Gastrocnemius medialis (tissue), 4 donors: ENCODE measurements at regions of chr10 and their contacts with region 1.

Region 1: DNA sequence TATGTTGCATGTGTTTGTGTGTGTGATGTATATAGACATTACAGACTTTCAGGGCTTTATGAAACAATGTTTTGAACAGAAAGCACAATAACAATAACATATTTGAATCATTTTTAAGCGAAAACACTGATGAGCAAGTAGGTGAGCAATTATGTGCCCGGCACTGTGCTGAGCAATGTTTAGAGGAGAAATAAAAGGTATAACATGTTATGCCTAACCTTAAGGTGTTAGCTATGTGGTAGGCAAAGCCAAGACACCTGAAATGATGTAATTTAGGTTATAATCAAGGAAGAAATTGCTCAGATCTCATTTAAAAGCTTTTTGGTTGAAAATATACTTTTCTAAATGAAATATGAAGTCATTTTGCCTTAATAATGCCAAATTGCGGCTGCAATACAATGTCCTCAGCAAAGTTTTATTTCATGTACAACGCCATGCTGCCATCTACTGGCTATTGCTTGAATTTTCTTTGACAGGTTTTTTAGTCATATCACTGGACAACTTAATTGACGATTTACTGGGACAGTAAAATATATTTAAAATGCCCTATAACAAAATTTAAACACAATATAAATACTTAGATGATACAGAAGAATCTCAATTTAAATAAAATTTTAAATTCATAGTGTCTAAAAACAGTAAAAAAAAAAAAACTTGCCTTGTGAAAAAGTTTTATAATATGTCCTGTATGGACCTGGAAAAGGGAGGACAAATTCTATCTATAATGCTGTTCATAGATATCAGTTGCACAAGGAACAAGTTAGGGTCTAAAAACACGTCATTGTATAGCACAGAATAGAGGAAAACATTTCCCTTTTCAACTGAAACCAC is 131.1 kb upstream of the CDK1 start:
- DNase-seq: no peak
- ATAC-seq: peak; percentile 62 to 72
- H3K4me3 ChIP-seq: no peak overlapping the region
- H3K27ac ChIP-seq: no peak overlapping the region
- H3K4me1 ChIP-seq: peaks cover 0 to 3% of the 10 kb centered on the region in 2 donors
- H3K27me3 ChIP-seq: no peaks in the 10 kb centered on the region
- CTCF ChIP-seq: peak; percentile 60 to 84 (median 73)
- POLR2A ChIP-seq: no peak

Region 2: DNA sequence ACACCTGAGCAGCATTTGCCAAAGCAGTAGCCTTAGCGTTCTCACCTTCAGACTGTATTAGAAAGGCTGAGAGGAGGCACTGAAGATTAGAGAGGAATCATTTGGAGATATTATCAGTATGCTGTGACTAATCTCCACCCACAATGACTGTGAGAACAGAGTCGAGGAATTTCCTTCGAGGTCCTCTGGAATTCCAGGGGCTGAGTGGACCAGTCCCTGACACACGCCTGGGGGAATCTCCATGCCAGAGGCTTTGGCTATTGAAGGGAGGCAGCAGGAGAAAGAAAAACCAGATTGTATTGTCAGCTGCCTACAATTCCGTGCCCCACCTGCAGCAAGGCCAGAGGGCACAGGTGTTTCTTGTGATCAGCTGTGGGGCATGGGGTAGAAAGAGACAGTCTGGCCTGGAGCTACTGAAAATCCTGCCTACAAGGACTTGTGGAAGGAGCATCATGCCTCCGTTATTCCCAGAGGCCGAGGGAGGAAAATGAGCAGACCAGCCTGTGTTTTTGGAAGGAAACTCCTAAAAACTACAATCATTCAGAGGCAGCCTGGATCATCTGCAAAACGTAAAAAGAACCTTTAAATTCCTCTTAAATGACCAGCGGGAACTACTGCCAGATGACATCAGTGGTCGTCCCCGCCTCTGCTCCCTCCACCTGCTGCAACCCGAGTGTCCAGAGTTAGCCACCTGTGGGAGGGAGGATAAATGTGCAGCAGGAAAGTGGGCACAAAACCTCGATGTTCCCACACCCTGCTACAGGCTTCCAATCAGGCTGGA is 232.2 kb before region 1 on chr10:
- in situ Hi-C with region 1: no loop called
- intact Hi-C with region 1: no loop called
- DNase-seq: no peak
- ATAC-seq: no peak
- H3K4me3 ChIP-seq: no peak overlapping the region
- H3K27ac ChIP-seq: no peak overlapping the region
- H3K4me1 ChIP-seq: no peaks in the 10 kb centered on the region
- H3K27me3 ChIP-seq: no peaks in the 10 kb centered on the region
- CTCF ChIP-seq: no peak
- POLR2A ChIP-seq: no peak

Region 3: DNA sequence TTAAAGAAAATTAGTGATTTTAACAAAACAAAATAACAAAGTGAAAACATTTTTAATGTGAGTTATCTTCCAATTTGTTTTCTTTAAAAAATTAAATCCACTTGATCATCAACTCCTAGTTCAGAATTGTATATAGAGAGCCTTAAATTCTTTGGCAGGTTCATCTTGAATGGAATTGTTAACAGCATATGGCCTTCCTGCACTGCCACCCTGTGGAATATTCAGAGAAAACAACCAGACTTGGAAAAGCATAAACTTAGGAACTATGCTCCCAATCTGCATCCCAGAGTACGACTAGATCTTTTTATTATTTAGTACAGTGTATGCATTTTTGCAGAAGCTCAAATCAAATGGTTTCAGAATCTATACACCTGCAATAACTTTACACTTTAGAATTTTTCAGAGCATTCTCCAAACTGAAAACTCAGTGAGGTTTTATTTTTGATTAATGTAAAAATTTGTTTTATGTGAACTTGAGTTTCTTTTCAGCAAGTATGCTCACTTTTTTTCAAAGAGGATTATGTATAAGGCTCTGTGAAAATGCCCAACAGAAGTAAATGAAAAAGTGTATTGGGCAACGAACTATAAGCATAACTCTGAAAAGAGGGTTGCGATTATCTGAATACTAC is 212.6 kb before region 1 on chr10:
- in situ Hi-C with region 1: loop called in 1 of 4 experiments (anchors 25 kb)
- intact Hi-C with region 1: no loop called
- DNase-seq: no peak
- ATAC-seq: no peak
- H3K4me3 ChIP-seq: no peak overlapping the region
- H3K27ac ChIP-seq: no peak overlapping the region
- H3K4me1 ChIP-seq: peaks cover 0 to 5% of the 10 kb centered on the region in 2 donors
- H3K27me3 ChIP-seq: no peaks in the 10 kb centered on the region
- CTCF ChIP-seq: peak in 4 of 5 experiments; percentile 54 to 61 (median 60)
- POLR2A ChIP-seq: no peak

Region 4: DNA sequence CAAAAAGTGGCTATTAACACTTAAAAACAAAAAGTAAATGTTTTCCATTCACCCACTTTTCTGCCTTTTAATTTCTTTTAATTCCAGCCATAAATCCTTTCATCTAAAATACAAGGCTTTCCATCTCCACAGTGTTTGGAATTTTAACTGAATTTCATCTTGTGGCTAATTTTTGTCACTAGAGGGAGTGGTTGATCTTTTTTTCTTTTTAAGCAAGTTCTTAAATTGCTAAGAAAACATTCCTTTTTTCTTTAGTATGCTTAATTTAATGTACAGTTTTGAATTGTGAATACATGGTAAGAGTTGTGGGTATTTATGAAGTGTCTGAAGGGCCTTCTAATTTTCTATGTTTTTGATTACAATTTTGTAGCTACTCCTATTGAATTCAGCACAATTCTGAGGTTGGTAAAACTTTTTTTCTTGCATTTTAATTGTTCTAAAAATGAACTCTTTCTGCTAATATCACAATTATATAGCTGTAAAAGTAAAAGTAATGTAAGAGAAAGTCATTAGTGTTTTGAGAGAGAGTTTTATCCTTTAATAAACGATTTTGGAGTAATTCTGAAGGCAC is 202.6 kb before region 1 on chr10:
- in situ Hi-C with region 1: loop called in 3 of 4 experiments (anchors 5 to 25 kb)
- intact Hi-C with region 1: loop called (anchors 2 kb)
- DNase-seq: no peak
- ATAC-seq: no peak
- H3K4me3 ChIP-seq: no peak overlapping the region
- H3K27ac ChIP-seq: no peak overlapping the region
- H3K4me1 ChIP-seq: peaks cover 11 to 12% of the 10 kb centered on the region in 2 donors
- H3K27me3 ChIP-seq: no peaks in the 10 kb centered on the region
- CTCF ChIP-seq: peak in 4 of 5 experiments; percentile 11 to 50 (median 26)
- POLR2A ChIP-seq: no peak

Region 5: GRCh38 chr10:60456053-60456452 is 191.1 kb before region 1 on chr10:
- in situ Hi-C with region 1: loop called in 1 of 4 experiments (anchors 10 kb)
- intact Hi-C with region 1: no loop called
- DNase-seq: no peak
- ATAC-seq: no peak
- H3K4me3 ChIP-seq: no peak overlapping the region
- H3K27ac ChIP-seq: no peak overlapping the region
- H3K4me1 ChIP-seq: peaks cover 9 to 16% of the 10 kb centered on the region in 2 donors
- H3K27me3 ChIP-seq: no peaks in the 10 kb centered on the region
- CTCF ChIP-seq: no peak
- POLR2A ChIP-seq: no peak

Region 6: DNA sequence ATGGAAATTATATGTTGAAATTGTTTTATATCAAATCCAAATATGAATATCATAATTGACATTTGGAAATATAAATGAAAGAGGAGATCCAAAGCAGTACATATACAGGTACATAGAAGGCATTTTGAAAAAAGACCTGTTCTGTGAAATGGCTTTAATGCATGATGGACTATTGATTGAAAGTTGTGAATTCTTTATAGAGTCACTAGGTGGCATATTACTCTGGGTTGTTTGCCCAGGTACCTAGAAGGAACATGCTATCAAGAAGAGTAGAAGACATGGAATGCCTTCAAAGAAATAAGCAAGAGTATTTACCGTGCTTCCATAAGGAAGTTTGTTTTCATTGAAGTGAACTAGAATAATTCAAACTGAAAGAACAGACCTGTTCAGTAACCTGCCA is 97.5 kb before region 1 on chr10:
- in situ Hi-C with region 1: loop called in 2 of 4 experiments (anchors 5 to 10 kb)
- intact Hi-C with region 1: loop called (anchors 1 kb)
- DNase-seq: no peak
- ATAC-seq: peak; percentile 70 to 71
- H3K4me3 ChIP-seq: no peak overlapping the region
- H3K27ac ChIP-seq: no peak overlapping the region
- H3K4me1 ChIP-seq: no peaks in the 10 kb centered on the region
- H3K27me3 ChIP-seq: no peaks in the 10 kb centered on the region
- CTCF ChIP-seq: peak in 4 of 5 experiments; percentile 30 to 52 (median 34)
- POLR2A ChIP-seq: no peak

Region 7: DNA sequence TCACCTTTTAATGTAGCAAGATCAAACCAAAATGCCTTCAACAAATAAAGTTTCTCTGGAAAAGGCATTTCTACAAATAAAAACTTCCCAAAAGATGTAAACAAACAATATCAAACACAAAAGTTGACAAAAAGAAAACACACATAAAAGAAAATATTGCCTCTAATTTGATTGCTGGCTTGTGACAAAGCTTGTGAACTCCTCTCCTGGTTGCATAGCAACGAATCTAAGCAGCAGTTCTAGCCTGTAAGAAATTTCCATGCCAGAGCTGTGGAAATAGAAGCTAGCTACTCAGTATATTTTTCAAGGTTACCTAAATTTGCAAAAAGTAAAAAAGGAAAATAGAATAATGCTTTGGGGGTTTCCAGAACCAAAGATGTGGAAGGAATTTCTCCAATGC is 42.8 kb before region 1 on chr10:
- in situ Hi-C with region 1: no loop called
- intact Hi-C with region 1: no loop called
- DNase-seq: no peak
- ATAC-seq: no peak
- H3K4me3 ChIP-seq: no peak overlapping the region
- H3K27ac ChIP-seq: no peak overlapping the region
- H3K4me1 ChIP-seq: no peaks in the 10 kb centered on the region
- H3K27me3 ChIP-seq: no peaks in the 10 kb centered on the region
- CTCF ChIP-seq: no peak
- POLR2A ChIP-seq: no peak

Region 8: GRCh38 chr10:61047081-61047480 is 399.9 kb after region 1 on chr10:
- in situ Hi-C with region 1: no loop called
- intact Hi-C with region 1: no loop called
- DNase-seq: no peak
- ATAC-seq: no peak
- H3K4me3 ChIP-seq: no peak overlapping the region
- H3K27ac ChIP-seq: no peak overlapping the region
- H3K4me1 ChIP-seq: no peaks in the 10 kb centered on the region
- H3K27me3 ChIP-seq: no peaks in the 10 kb centered on the region
- CTCF ChIP-seq: no peak
- POLR2A ChIP-seq: no peak